CD14-positive monocyte (primary cell): ENCODE measurements at regions of chr17 and their contacts with region 1.

Region 1: DNA sequence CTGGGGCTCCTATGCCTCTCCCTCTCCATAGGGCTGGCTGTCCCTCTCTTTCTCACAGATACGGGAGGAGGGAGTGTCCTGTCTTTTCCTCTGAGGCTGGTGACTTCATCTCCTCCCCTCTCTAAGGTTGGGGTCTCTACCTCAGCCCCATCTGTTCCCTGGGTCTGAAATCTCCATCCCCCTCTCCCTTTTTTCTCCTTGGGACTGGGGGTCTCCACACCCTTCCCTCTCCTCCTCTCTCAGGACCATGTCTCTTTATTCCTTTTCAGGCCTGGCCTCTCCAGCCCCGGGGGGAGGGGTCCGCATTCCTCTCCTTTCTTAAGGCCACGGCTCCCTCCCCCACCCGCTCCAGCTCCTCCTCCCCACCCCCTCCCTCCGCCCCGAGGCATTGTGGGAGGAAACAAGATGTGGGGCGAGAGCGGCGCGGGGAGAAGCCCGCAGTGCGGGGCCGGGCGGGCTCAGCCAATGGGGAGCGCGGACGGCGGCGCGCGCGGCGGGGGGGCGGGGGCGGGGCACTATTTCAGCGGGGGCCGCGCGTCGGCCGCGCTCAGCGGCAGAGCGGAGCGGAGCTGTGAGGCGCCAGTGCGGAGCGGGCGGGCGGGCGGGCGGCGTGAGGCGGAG is at the start of gene DYNLL2:
- DNase-seq: peak; percentile 82 to 89 (median 84)
- H3K4me3 ChIP-seq: peak within 1 kb of the TSS; percentile 70 to 86 (median 78)
- H3K4me3 Mint-ChIP-seq: peak within 1 kb of the TSS; percentile 88
- H3K27ac ChIP-seq: peak within 1 kb of the TSS; percentile 51 to 89
- H3K27ac Mint-ChIP-seq: peak within 1 kb of the TSS; percentile 74 to 93 (median 83)
- H3K4me1 ChIP-seq: peaks cover 18 to 23% of the 10 kb centered on the region in 2 donors
- H3K4me1 Mint-ChIP-seq: peaks cover 28% of the 10 kb centered on the region
- H3K27me3 ChIP-seq: no peaks in the 10 kb centered on the region
- H3K27me3 Mint-ChIP-seq: peaks cover 0 to 17% (median 5%) of the 10 kb centered on the region in 3 donors
- CTCF ChIP-seq: no peak
- polyA plus RNA-seq, gene DYNLL2: 0.30 to 9.9 (median 0.42) TPM

Region 2: GRCh38 chr17:57084802-57085447 is 998.1 kb before region 1 on chr17 and contains the start of gene AKAP1:
- intact Hi-C with region 1: loop called in 1 of 2 experiments (anchors 5 kb)
- DNase-seq: peak; percentile 93 to 95 (median 94)
- H3K4me3 ChIP-seq: peak within 1 kb of the TSS; percentile 75 to 90 (median 79)
- H3K4me3 Mint-ChIP-seq: peak within 1 kb of the TSS; percentile 92 to 94
- H3K27ac ChIP-seq: peak within 1 kb of the TSS; percentile 92 to 97
- H3K27ac Mint-ChIP-seq: peak within 1 kb of the TSS; percentile 89 to 96 (median 94)
- H3K4me1 ChIP-seq: peaks cover 37 to 52% of the 10 kb centered on the region in 2 donors
- H3K4me1 Mint-ChIP-seq: peaks cover 48% of the 10 kb centered on the region
- H3K27me3 ChIP-seq: no peaks in the 10 kb centered on the region
- H3K27me3 Mint-ChIP-seq: peaks cover 0 to 4% (median 0%) of the 10 kb centered on the region in 3 donors
- CTCF ChIP-seq: no peak
- polyA plus RNA-seq, gene AKAP1: 5.6 to 14.6 (median 6.8) TPM

Region 3: DNA sequence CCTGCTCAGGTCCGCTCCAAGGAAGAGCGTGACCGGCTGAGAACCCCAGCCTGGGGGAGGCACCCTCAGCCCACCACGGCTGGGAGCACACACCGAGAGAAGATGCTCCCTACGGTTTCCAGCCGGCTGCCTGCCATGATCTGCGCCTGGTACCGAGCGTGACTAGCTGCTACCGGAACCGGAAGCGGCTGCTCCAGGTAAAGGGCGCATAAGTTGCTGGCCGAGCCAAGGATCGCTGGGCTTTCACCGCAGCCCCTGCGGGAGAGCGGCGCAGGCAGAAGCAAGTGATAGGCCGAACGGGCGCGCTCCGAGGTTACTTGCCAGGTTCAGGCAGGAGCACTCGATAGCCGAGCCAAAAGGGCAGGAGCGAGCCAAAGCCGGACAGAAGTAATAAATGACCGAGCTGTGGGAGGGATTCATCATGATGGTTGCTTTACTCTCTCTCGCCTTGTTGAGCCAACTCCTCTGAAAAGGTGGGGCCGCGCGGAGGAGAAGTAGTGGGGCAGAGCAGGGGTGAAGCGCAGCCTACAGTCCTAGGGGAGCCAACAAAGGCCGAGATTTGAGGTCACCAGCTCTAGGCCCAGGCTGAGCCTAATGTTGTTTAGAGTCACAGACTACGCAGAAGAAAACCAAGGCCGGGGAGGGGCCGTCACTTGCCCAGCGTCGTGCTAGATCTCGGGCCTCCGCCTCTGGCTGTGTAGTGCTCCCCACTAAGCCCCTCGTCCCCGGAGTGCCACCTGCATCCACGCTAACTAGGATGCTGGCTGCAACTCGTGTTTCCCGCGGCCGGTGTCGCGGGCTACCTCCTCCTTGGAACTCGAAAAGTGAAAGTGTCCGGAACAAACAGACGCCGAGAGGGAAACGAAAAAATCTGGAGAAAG is 232.9 kb before region 1 on chr17 and contains the start of gene MRPS23:
- intact Hi-C with region 1: loop called (anchors 10 kb)
- DNase-seq: peak; percentile 94 to 95 (median 95)
- H3K4me3 ChIP-seq: peak within 1 kb of the TSS; percentile 81 to 96 (median 86)
- H3K4me3 Mint-ChIP-seq: peak within 1 kb of the TSS; percentile 98 to 99
- H3K27ac ChIP-seq: peak within 1 kb of the TSS; percentile 90 to 96
- H3K27ac Mint-ChIP-seq: peak within 1 kb of the TSS; percentile 94 to 99 (median 97)
- H3K4me1 ChIP-seq: peaks cover 39 to 42% of the 10 kb centered on the region in 2 donors
- H3K4me1 Mint-ChIP-seq: peaks cover 45% of the 10 kb centered on the region
- H3K27me3 ChIP-seq: no peaks in the 10 kb centered on the region
- H3K27me3 Mint-ChIP-seq: no peaks in the 10 kb centered on the region
- CTCF ChIP-seq: no peak
- polyA plus RNA-seq, gene MRPS23: 14.5 to 40.6 (median 32.7) TPM

Region 4: DNA sequence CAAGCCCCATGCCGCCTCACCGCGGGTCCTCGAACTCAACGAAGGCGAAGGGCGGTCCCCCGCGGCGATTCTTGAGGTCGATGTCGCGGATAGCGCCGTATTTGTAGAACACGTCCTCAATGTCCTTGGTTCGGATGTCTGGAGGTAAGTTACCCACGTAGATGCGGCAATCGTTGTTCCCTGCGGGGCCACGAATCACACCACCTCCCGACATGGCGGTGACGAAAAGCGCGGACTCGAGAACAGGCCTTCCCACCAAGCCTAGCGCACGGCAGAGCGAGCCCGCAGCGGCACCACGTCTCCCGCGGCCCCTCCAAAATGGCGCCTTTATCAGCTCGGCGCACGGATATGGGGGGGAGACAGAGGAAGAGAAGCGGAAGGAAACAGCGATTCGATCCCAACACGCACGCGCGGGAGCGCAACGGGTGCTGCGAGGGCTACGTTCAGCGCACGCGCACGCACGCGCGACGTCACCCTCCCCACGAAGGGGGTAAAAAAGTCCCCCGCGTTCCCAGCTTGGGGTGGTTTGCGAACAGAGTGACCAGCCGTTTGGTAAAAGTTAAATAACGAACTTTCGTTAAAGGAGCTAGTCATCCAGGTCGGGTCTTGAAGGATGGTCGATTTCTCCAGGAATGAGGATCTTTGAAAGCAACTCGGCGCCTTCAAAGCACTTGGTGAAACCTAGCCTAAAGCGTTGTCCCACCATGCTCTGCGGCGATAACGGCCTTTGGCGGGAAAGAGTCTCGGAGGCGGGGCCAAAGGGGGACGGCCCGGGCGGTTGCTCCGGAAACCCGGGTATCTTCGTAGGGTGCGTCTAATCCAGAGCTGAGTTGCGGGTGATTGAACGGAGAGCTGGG is 75.8 kb before region 1 on chr17 and contains the start of gene SRSF1:
- intact Hi-C with region 1: loop called (anchors 5 kb)
- DNase-seq: peak; percentile 96 to 98 (median 98)
- H3K4me3 ChIP-seq: peak within 1 kb of the TSS; percentile 67 to 99 (median 82)
- H3K4me3 Mint-ChIP-seq: peak within 1 kb of the TSS; percentile 98 to 99
- H3K27ac ChIP-seq: peak within 1 kb of the TSS; percentile 92 to 97
- H3K27ac Mint-ChIP-seq: peak within 1 kb of the TSS; percentile 98 to 99 (median 99)
- H3K4me1 ChIP-seq: peaks cover 27 to 39% of the 10 kb centered on the region in 2 donors
- H3K4me1 Mint-ChIP-seq: peaks cover 38% of the 10 kb centered on the region
- H3K27me3 ChIP-seq: no peaks in the 10 kb centered on the region
- H3K27me3 Mint-ChIP-seq: peaks cover 0 to 8% (median 0%) of the 10 kb centered on the region in 3 donors
- CTCF ChIP-seq: no peak
- polyA plus RNA-seq, gene SRSF1: 51.2 to 72.1 (median 61.6) TPM

Region 5: GRCh38 chr17:58136669-58137283 is 53.8 kb after region 1 on chr17:
- intact Hi-C with region 1: no loop called
- DNase-seq: no peak
- H3K4me3 ChIP-seq: no peak overlapping the region
- H3K4me3 Mint-ChIP-seq: no peak overlapping the region
- H3K27ac ChIP-seq: no peak overlapping the region
- H3K27ac Mint-ChIP-seq: no peak overlapping the region
- H3K4me1 ChIP-seq: no peaks in the 10 kb centered on the region
- H3K4me1 Mint-ChIP-seq: no peaks in the 10 kb centered on the region
- H3K27me3 ChIP-seq: peaks cover 18% of the 10 kb centered on the region in 2 donors
- H3K27me3 Mint-ChIP-seq: peaks cover 16 to 40% (median 17%) of the 10 kb centered on the region in 3 donors
- CTCF ChIP-seq: no peak